ENCODE measurements at regions of chr10 and their contacts with region 1.

Region 1: GRCh38 chr10:114304017-114304570 is 65.0 kb downstream of the VWA2 start:
- DNase-seq: peak; percentile 54
- H3K4me3 Mint-ChIP-seq: peak overlapping the region; percentile 84
- H3K27ac Mint-ChIP-seq: peak overlapping the region; percentile 54
- H3K4me1 Mint-ChIP-seq: peaks cover 24% of the 10 kb centered on the region
- H3K27me3 Mint-ChIP-seq: peaks cover 5% of the 10 kb centered on the region

Region 2: GRCh38 chr10:114239117-114239993 is 64.7 kb before region 1 on chr10 and contains the start of gene VWA2:
- intact Hi-C with region 1: no loop called
- DNase-seq: peak; percentile 2
- H3K4me3 Mint-ChIP-seq: peak within 1 kb of the TSS; percentile 11
- H3K27ac Mint-ChIP-seq: no peak within 1 kb of the TSS
- H3K4me1 Mint-ChIP-seq: no peaks in the 10 kb centered on the region
- H3K27me3 Mint-ChIP-seq: peaks cover 53% of the 10 kb centered on the region
- total RNA-seq, gene VWA2: not detected in 2 replicates

Region 3: DNA sequence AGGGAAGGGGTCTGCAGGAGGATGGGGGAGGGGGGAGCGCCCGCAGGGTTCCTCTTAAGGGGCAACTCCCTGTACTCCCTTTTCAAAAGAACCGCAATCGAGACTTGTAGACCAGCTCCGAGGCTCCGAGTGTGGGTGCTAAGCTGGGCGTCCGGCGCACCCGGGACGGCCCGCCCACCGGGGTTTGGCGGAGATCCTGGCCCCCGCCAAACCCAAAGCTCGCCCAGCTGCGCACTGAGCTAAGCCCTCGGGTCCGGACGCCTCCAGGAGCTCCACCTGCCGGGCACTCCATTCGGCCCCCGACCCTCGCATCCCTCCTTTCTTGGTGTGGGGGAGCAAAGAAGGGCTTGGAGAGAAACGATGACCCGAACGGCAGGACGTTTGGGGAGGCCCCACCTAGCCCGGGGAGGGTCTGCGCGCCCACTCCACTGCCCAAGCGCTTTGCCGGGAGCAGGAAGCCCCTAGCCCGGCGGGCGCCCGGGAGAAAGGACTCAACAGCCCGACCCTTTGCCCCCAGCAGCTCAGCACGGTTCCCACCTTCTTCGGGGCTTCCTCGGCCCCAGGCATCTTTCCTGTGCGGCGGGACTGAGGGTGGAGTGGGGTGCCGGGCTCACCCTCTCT is 99.6 kb after region 1 on chr10:
- intact Hi-C with region 1: loop called (anchors 1 kb)
- DNase-seq: no peak
- H3K4me3 Mint-ChIP-seq: no peak overlapping the region
- H3K27ac Mint-ChIP-seq: no peak overlapping the region
- H3K4me1 Mint-ChIP-seq: peaks cover 7% of the 10 kb centered on the region
- H3K27me3 Mint-ChIP-seq: peaks cover 58% of the 10 kb centered on the region

Region 4: GRCh38 chr10:114470956-114471905 is 167.1 kb after region 1 on chr10:
- intact Hi-C with region 1: loop called (anchors 5 kb)
- DNase-seq: peak; percentile 54
- H3K4me3 Mint-ChIP-seq: no peak overlapping the region
- H3K27ac Mint-ChIP-seq: no peak overlapping the region
- H3K4me1 Mint-ChIP-seq: peaks cover 31% of the 10 kb centered on the region
- H3K27me3 Mint-ChIP-seq: no peaks in the 10 kb centered on the region

Region 5: DNA sequence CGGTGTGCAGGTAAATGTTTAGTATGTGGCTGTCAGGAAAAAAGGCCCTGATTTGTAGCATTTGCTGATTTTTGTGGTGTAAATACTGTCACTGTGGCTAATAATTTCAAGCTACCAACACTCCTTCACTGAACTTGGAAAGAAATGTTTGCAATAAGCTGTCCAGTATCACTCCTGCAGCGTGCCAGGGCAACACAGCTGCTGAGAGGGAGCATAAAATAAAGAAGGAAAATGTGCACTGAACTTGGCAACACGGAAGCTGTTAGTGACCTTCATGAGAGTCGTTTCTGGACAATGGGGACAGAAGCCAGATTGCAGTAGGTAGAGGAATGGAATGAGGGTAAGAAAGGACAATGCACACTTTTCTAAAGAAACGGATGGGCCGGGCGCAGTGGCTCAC is 479.6 kb after region 1 on chr10:
- intact Hi-C with region 1: loop called (anchors 1 kb)
- DNase-seq: no peak
- H3K4me3 Mint-ChIP-seq: no peak overlapping the region
- H3K27ac Mint-ChIP-seq: no peak overlapping the region
- H3K4me1 Mint-ChIP-seq: peaks cover 14% of the 10 kb centered on the region
- H3K27me3 Mint-ChIP-seq: no peaks in the 10 kb centered on the region

Region 6: DNA sequence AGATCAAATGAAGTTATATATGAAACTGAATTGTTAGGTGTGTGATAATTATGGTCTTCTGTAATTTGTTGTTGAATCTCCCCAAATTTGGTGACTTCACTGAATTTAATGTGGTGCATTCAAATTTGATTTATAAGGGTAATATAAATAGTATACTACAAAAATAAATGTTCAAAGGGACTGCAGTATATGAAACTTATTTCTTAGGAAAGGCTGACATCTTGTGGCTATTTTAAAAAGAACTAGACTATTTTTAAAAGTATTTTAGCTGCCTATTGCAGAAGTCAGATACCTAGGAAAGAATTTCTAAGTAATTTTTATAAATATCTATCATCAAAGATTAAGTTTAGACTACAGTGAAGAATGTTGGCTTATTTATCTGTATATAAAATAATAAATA is 825.7 kb after region 1 on chr10:
- intact Hi-C with region 1: loop called (anchors 1 kb)
- DNase-seq: no peak
- H3K4me3 Mint-ChIP-seq: no peak overlapping the region
- H3K27ac Mint-ChIP-seq: no peak overlapping the region
- H3K4me1 Mint-ChIP-seq: no peaks in the 10 kb centered on the region
- H3K27me3 Mint-ChIP-seq: peaks cover 3% of the 10 kb centered on the region